GM12878 (cell line): ENCODE measurements at regions of chr5 and their contacts with region 1.

Region 1: GRCh38 chr5:116898917-116899316 is 324.3 kb upstream of the SEMA6A start:
- DNase-seq: no peak
- ATAC-seq: peak; percentile 51
- H3K4me3 ChIP-seq: no peak overlapping the region
- H3K27ac ChIP-seq: no peak overlapping the region
- H3K4me1 ChIP-seq: peaks cover 3% of the 10 kb centered on the region; the same call in 1 of the 2 replicates
- H3K27me3 ChIP-seq: no peaks in the 10 kb centered on the region
- CTCF ChIP-seq: no peak
- EP300 ChIP-seq: no peak
- POLR2A ChIP-seq: no peak
- RAD21 ChIP-seq: no peak

Region 2: GRCh38 chr5:116885825-116886224 is 13.1 kb before region 1 on chr5:
- CTCF ChIA-PET with region 1: interaction called, 7 read pairs
- POLR2A ChIA-PET with region 1: interaction called, 3 read pairs
- RAD21 ChIA-PET with region 1: interaction called, 14 read pairs
- SMC1A ChIA-PET with region 1: interaction called, 21 read pairs
- in situ Hi-C with region 1: no loop called
- intact Hi-C with region 1: no loop called
- DNase-seq: no peak
- ATAC-seq: peak; percentile 72
- H3K4me3 ChIP-seq: no peak overlapping the region
- H3K27ac ChIP-seq: no peak overlapping the region
- H3K4me1 ChIP-seq: peaks cover 23% of the 10 kb centered on the region
- H3K27me3 ChIP-seq: no peaks in the 10 kb centered on the region
- CTCF ChIP-seq: no peak; a peak in 1 of 6 replicates
- EP300 ChIP-seq: peak in 1 of 2 experiments; percentile 49; a peak in 1 of 4 replicates
- POLR2A ChIP-seq: no peak
- RAD21 ChIP-seq: no peak

Region 3: DNA sequence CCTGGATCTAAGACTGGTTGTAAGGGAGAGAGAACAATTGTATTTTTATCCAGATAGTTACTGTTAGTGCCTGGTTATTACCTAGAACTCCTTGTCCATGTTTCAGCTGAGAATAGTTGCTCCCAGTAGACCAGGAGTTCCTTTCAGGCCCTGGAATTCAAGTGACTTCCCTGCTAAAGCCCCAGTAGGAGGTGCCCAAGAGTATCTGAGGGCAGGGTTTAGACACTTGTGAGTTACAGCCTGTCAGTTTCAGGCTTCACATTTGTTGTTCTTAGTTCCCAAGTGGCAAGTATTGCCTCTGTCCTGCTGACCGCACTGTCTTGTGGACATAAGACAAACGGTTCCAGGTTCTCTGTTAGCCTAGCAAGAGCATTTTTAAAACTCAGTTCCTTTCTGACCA is 419.6 kb after region 1 on chr5:
- CTCF ChIA-PET with region 1: no interaction called
- POLR2A ChIA-PET with region 1: no interaction called
- RAD21 ChIA-PET with region 1: no interaction called
- SMC1A ChIA-PET with region 1: no interaction called
- in situ Hi-C with region 1: no loop called
- intact Hi-C with region 1: no loop called
- DNase-seq: no peak
- ATAC-seq: no peak
- H3K4me3 ChIP-seq: no peak overlapping the region
- H3K27ac ChIP-seq: no peak overlapping the region
- H3K4me1 ChIP-seq: no peaks in the 10 kb centered on the region
- H3K27me3 ChIP-seq: no peaks in the 10 kb centered on the region
- CTCF ChIP-seq: no peak
- EP300 ChIP-seq: no peak
- POLR2A ChIP-seq: no peak
- RAD21 ChIP-seq: no peak